ENCODE measurements at regions of chrX and their contacts with region 1.

Region 1: GRCh38 chrX:154840856-154841255 is 6.4 kb upstream of the SMIM9 start:
- DNase-seq: peak; percentile 22
- ATAC-seq: peak; percentile 70
- H3K4me3 ChIP-seq: no peak overlapping the region
- H3K27ac ChIP-seq: no peak overlapping the region
- H3K4me1 ChIP-seq: no peaks in the 10 kb centered on the region
- H3K27me3 ChIP-seq: no peaks in the 10 kb centered on the region
- CTCF ChIP-seq: peak; percentile 27 to 64 (median 50); a peak in 5 of 6 replicates
- POLR2A ChIP-seq: no peak
- RAD21 ChIP-seq: peak; percentile 82

Region 2: DNA sequence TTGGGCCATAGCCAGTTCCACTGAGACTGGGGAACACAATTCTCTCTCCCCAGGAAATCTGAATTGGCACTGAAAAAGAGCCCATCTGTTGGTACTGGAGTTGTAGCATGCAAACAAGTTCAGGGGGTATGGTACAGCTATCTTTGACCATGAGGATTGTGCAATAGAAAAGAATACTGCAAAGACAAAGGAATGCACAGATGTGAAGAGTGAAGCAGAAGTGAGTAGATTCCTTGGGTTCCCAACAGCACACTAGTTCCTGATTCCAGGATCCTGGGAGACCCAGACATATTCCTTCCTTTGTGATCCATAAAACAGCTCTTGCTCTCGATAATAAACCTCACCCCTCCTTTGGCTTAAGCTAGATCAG is 144.2 kb before region 1 on chrX:
- CTCF ChIA-PET with region 1: no interaction called
- POLR2A ChIA-PET with region 1: no interaction called
- RAD21 ChIA-PET with region 1: no interaction called
- intact Hi-C with region 1: no loop called
- DNase-seq: no peak
- ATAC-seq: no peak
- H3K4me3 ChIP-seq: no peak overlapping the region
- H3K27ac ChIP-seq: no peak overlapping the region
- H3K4me1 ChIP-seq: no peaks in the 10 kb centered on the region
- H3K27me3 ChIP-seq: no peaks in the 10 kb centered on the region
- CTCF ChIP-seq: no peak
- POLR2A ChIP-seq: no peak
- RAD21 ChIP-seq: no peak

Region 3: GRCh38 chrX:154714925-154715324 is 125.9 kb before region 1 on chrX:
- CTCF ChIA-PET with region 1: no interaction called
- POLR2A ChIA-PET with region 1: no interaction called
- RAD21 ChIA-PET with region 1: no interaction called
- intact Hi-C with region 1: loop called (anchors 10 kb)
- DNase-seq: peak; percentile 23
- ATAC-seq: peak; percentile 89
- H3K4me3 ChIP-seq: no peak overlapping the region
- H3K27ac ChIP-seq: no peak overlapping the region
- H3K4me1 ChIP-seq: no peaks in the 10 kb centered on the region
- H3K27me3 ChIP-seq: no peaks in the 10 kb centered on the region
- CTCF ChIP-seq: peak; percentile 63 to 70 (median 64); a peak in 5 of 6 replicates
- POLR2A ChIP-seq: no peak
- RAD21 ChIP-seq: peak; percentile 72